Calu3 (cell line): ENCODE measurements at regions of chr4 and their contacts with region 1.

Region 1: DNA sequence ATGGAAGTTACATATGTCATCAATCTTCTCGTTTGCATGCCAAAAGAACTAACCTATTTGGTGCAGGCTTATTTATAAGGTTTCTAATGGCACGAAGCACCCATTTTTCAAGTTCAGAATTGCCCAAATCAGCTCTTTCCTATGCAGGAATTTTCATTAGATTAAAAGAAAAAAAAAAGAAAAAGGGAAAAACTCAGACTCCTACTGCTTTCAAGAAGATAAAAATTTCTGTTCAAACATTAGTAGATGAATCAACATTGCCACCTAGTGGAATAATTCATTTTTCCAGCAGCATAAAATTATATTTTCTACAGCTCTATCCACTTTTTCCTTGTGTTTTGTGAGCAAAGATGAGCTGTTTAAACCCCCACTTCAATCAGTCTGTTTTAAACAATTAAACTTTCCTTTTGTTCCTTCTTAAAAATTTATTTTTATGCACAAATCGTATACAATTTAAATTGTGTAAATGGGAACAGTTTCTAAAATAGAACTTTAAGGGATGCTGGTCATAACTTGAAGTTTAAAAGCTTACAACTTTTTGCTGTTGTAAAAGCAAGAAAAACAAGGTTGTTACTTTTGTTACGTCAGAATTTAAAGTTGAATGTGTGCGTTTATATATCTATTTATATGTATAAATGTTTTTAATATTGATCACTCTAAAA is 309.9 kb downstream of the ARAP2 start:
- DNase-seq: no peak
- H3K4me3 Mint-ChIP-seq: no peak overlapping the region
- H3K27ac Mint-ChIP-seq: no peak overlapping the region
- H3K4me1 Mint-ChIP-seq: no peaks in the 10 kb centered on the region
- H3K27me3 Mint-ChIP-seq: peaks cover 10% of the 10 kb centered on the region
- CTCF ChIP-seq: no peak

Region 2: GRCh38 chr4:35105486-35105885 is 829.0 kb before region 1 on chr4:
- CTCF ChIA-PET with region 1: no interaction called
- intact Hi-C with region 1: no loop called
- DNase-seq: no peak
- H3K4me3 Mint-ChIP-seq: no peak overlapping the region
- H3K27ac Mint-ChIP-seq: no peak overlapping the region
- H3K4me1 Mint-ChIP-seq: no peaks in the 10 kb centered on the region
- H3K27me3 Mint-ChIP-seq: no peaks in the 10 kb centered on the region
- CTCF ChIP-seq: no peak

Region 3: GRCh38 chr4:36187723-36188333 is 253.4 kb after region 1 on chr4:
- CTCF ChIA-PET with region 1: no interaction called
- intact Hi-C with region 1: loop called (anchors 10 kb)
- DNase-seq: no peak
- H3K4me3 Mint-ChIP-seq: no peak overlapping the region
- H3K27ac Mint-ChIP-seq: no peak overlapping the region
- H3K4me1 Mint-ChIP-seq: no peaks in the 10 kb centered on the region
- H3K27me3 Mint-ChIP-seq: no peaks in the 10 kb centered on the region
- CTCF ChIP-seq: peak; percentile 29